Activated CD8-positive, alpha-beta T cell treated with anti-CD3 and anti-CD28 coated beads for 36 hours (primary cell): ENCODE measurements at regions of chr12 and their contacts with region 1.

Region 1: DNA sequence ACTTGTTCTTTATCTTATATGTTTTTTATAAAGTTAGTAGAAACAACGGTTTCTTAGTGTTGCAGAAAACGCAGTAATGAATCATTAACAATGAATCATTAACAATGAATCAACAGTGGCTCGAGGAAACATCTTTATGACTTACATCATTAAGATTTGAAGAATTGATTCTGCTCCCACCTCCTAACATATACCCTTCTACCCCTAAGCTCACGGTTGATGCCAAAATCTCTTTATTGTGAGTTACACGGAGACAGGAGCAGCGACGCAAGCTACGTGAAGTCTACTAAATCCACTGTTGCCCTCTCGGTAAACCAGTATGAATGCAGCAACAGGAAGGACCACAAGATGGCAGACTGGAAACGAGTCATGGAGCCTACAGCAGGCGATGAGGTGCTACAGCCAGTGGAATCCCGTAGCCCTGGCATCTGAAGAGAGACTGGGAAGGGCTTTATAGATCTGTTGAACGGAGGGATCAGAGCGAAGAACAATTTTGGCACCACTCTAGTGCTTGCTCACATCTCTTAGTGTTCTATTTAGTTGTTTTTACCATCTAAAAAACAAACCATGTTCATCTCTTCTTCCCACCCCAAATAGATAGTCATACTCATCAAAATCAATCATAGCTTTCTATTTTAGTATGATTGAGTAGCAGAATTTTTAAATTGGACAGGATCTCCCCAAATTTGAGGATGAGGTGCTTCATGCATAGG is 332.7 kb downstream of the DUSP6 start:
- DNase-seq: peak; percentile 86
- ATAC-seq: peak; percentile 93
- H3K4me3 Mint-ChIP-seq: no peak overlapping the region
- H3K27ac Mint-ChIP-seq: peak overlapping the region; percentile 55
- H3K4me1 Mint-ChIP-seq: peaks cover 13% of the 10 kb centered on the region
- H3K27me3 Mint-ChIP-seq: peaks cover 3% of the 10 kb centered on the region
- CTCF ChIP-seq: peak; percentile 81

Region 2: GRCh38 chr12:88420457-88420856 is 599.1 kb before region 1 on chr12:
- CTCF ChIA-PET with region 1: no interaction called
- POLR2A ChIA-PET with region 1: no interaction called
- intact Hi-C with region 1: no loop called
- DNase-seq: no peak
- ATAC-seq: no peak
- H3K4me3 Mint-ChIP-seq: no peak overlapping the region
- H3K27ac Mint-ChIP-seq: no peak overlapping the region
- H3K4me1 Mint-ChIP-seq: no peaks in the 10 kb centered on the region
- H3K27me3 Mint-ChIP-seq: no peaks in the 10 kb centered on the region
- CTCF ChIP-seq: no peak

Region 3: GRCh38 chr12:89029961-89030360 is 10.4 kb after region 1 on chr12:
- CTCF ChIA-PET with region 1: interaction called, 12 read pairs
- POLR2A ChIA-PET with region 1: no interaction called
- intact Hi-C with region 1: no loop called
- DNase-seq: no peak
- ATAC-seq: no peak
- H3K4me3 Mint-ChIP-seq: no peak overlapping the region
- H3K27ac Mint-ChIP-seq: no peak overlapping the region
- H3K4me1 Mint-ChIP-seq: peaks cover 26% of the 10 kb centered on the region
- H3K27me3 Mint-ChIP-seq: peaks cover 9% of the 10 kb centered on the region
- CTCF ChIP-seq: no peak

Region 4: GRCh38 chr12:89051065-89051677 is 31.6 kb after region 1 on chr12:
- CTCF ChIA-PET with region 1: interaction called, 77 read pairs
- POLR2A ChIA-PET with region 1: no interaction called
- intact Hi-C with region 1: loop called (anchors 5 kb)
- DNase-seq: peak; percentile 26
- ATAC-seq: peak; percentile 74
- H3K4me3 Mint-ChIP-seq: no peak overlapping the region
- H3K27ac Mint-ChIP-seq: no peak overlapping the region
- H3K4me1 Mint-ChIP-seq: peaks cover 1% of the 10 kb centered on the region
- H3K27me3 Mint-ChIP-seq: peaks cover 2% of the 10 kb centered on the region
- CTCF ChIP-seq: peak; percentile 87

Region 5: GRCh38 chr12:89352492-89353187 is 333.1 kb after region 1 on chr12 and contains the start of gene DUSP6:
- CTCF ChIA-PET with region 1: interaction called, 10 read pairs
- POLR2A ChIA-PET with region 1: interaction called, 7 read pairs
- intact Hi-C with region 1: loop called (anchors 5 kb)
- DNase-seq: peak; percentile 95
- ATAC-seq: peak; percentile 83
- H3K4me3 Mint-ChIP-seq: peak within 1 kb of the TSS; percentile 94
- H3K27ac Mint-ChIP-seq: peak within 1 kb of the TSS; percentile 93
- H3K4me1 Mint-ChIP-seq: peaks cover 35% of the 10 kb centered on the region
- H3K27me3 Mint-ChIP-seq: peaks cover 16% of the 10 kb centered on the region
- CTCF ChIP-seq: no peak
- total RNA-seq, gene DUSP6: 15.3 to 16.6 TPM

Region 6: DNA sequence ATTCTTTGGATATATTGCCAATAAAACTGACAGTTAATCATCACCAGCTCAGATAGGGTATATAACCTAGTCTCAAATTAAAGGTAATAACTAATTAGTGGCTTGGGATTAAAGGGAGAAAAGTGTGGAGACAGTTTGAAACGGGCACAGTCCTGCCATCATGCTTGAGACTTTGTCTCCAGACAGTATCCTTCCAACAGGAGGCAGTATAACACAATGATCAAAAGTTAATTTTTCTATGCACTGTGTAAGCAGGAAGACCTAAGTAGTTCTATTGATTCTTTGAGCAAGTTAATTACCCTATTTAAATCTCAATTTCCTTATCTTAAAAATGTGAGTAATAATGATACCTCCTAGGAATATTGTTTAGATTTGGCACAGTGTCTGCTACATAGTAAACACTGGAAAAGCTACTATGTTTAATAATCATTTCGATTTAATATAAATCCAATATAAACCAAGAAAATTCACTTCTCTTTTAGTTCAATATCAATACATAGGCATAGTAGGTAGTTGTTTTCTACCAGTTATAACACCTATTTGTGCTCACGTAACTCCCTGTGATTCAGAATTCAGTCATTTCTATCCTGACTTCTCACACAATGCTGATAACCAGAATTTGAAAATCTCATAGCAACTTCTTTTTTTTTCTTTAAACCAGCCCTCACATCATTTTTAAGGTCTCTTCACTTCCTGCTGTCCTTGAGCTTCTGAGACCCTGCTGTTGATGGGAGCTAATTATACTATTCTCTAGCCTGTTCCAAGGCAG is 451.4 kb after region 1 on chr12:
- CTCF ChIA-PET with region 1: interaction called, 71 read pairs
- POLR2A ChIA-PET with region 1: interaction called, 3 read pairs
- intact Hi-C with region 1: no loop called
- DNase-seq: no peak
- ATAC-seq: peak; percentile 43
- H3K4me3 Mint-ChIP-seq: no peak overlapping the region
- H3K27ac Mint-ChIP-seq: peak overlapping the region; percentile 80
- H3K4me1 Mint-ChIP-seq: peaks cover 65% of the 10 kb centered on the region
- H3K27me3 Mint-ChIP-seq: no peaks in the 10 kb centered on the region
- CTCF ChIP-seq: peak; percentile 62

Region 7: DNA sequence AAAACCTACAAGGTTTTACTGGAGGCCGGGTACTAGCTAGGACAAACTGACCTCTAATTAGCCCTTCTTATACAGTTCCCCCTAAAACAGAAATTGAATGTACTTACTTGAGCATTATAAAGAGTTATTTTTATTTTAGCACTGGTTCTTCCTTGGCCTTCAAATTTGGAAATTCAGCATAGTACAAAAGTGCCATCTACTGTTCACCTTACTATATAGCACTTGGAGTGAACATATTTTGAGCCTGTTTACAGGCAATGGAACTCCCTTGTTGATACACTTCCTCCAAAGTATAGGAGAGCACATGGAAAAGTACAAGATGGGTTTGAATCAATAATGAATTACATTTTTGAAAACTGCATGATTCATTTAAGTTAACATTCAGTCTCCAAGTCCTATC is 510.2 kb after region 1 on chr12:
- CTCF ChIA-PET with region 1: interaction called, 59 read pairs
- POLR2A ChIA-PET with region 1: no interaction called
- intact Hi-C with region 1: loop called (anchors 2 kb)
- DNase-seq: no peak
- ATAC-seq: peak; percentile 25
- H3K4me3 Mint-ChIP-seq: no peak overlapping the region
- H3K27ac Mint-ChIP-seq: peak overlapping the region; percentile 7
- H3K4me1 Mint-ChIP-seq: peaks cover 26% of the 10 kb centered on the region
- H3K27me3 Mint-ChIP-seq: no peaks in the 10 kb centered on the region
- CTCF ChIP-seq: peak; percentile 74